ENCODE measurements at regions of chr2 and their contacts with region 1.

Region 1: GRCh38 chr2:42063431-42064171 is 15.8 kb downstream of the PKDCC start:
- DNase-seq: peak in 1 of 2 donors; percentile 59
- H3K4me3 ChIP-seq: peak overlapping the region in 1 of 2 donors; percentile 18
- H3K27ac ChIP-seq: peak overlapping the region; percentile 97 to 98
- H3K4me1 ChIP-seq: peaks cover 16 to 53% of the 10 kb centered on the region in 2 donors
- H3K27me3 ChIP-seq: no peaks in the 10 kb centered on the region
- CTCF ChIP-seq: no peak

Region 2: GRCh38 chr2:42047488-42048298 is 15.9 kb before region 1 on chr2 and contains the start of gene PKDCC:
- intact Hi-C with region 1: loop called (anchors 1 kb)
- DNase-seq: peak in 1 of 2 donors; percentile 92
- H3K4me3 ChIP-seq: peak within 1 kb of the TSS; percentile 84 to 97
- H3K27ac ChIP-seq: peak within 1 kb of the TSS; percentile 97 to 98
- H3K4me1 ChIP-seq: peaks cover 3 to 28% of the 10 kb centered on the region in 2 donors
- H3K27me3 ChIP-seq: no peaks in the 10 kb centered on the region
- CTCF ChIP-seq: no peak
- total RNA-seq, gene PKDCC: 210 TPM

Measured in ascending aorta (tissue), 2 donors.